Ascending aorta (tissue), 2 donors: ENCODE measurements at regions of chr16 and their contacts with region 1.

Region 1: DNA sequence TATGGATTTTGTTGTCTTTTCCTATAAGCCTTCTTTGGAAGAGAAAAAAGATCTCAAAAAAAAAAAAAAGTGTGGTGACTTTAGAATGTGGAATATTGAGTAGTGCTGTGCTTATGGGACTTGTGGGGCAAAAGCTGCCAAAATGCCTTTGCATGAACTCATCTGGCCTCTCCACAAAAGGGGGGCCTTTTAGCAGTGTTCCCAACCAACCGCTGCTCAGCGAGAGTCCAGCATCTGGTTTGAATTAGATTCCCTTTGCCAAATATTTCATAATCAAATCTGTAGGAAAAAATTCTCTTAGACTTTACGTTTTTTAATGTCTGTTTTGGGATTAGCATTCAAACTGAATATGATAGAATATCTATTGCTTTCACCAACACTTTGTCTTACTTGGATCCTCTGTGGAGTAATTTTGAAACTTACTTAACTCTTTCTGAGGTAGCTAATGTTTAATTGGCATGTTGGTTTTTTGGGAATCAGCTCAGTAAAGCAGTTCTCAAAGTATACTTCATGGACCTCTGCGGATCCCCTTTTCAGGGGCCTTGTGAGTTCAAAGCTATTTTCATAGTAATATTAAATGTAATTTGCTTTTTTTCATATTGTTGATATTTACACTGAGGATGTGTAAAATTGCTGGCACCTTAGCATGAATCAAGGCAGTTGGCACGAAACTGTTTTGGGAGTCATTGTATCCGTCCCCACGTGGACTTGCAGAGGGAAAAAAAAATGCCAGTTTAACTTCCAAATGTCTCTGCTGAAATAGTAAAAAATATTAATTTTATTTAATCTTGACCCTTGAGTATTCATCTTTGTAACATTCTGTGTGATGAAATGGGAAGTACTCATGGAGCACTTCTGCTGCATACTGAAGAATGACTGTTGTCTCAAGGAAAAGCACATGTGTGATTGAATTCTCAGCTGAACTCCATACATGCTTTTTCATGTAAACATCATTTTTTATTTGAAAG is 34.7 kb upstream of the VPS4A start:
- DNase-seq: peak; percentile 16 to 89
- H3K4me3 ChIP-seq: no peak overlapping the region
- H3K27ac ChIP-seq: peak overlapping the region; percentile 12 to 33
- H3K4me1 ChIP-seq: peaks cover 0 to 19% of the 10 kb centered on the region in 2 donors
- H3K27me3 ChIP-seq: no peaks in the 10 kb centered on the region
- CTCF ChIP-seq: no peak

Region 2: DNA sequence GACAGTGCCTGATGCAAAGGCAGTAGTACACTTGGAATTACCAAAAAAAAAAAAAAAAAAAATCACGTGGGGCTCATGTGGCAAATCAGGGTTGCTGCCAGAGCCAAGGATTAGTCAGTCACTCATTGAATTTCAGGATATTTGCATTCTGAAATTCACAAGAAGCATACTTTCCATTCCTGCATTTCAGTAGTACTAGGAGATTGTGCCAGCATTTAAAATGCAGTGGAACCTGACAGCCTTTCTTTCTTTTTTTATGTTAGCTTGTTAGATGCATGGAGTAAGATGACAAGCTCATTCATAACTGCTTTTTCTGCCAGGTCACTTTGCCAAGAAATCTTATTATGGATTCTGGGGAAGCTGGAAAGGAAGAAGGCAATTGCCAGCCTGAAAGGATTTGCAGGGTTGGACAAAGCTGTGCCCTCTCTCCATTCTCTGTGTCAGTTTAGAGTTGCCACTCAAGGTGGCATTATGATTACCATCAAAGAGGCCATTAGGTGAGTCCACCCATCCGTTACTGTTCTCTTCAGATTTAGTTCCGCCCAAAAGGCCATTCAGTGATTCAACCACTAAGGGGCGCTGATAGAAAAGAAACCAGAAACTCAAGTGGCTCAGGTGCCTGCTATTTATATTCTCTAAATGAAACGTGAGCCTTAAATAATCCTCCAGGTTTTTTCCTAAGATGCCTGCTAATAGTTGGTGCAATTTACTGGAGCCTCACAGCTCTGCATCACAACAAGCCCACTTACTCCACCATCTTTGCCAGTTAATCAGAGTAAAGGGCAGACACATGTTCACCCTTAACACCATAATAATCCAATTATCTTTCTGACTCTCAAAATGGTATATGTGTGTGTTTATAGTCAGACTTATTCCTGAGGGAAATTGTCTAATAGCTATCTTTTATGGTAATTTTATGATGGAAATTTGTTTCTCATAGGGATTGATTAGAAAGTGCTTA is 374.1 kb before region 1 on chr16:
- intact Hi-C with region 1: loop called (anchors 5 kb)
- DNase-seq: no peak
- H3K4me3 ChIP-seq: no peak overlapping the region
- H3K27ac ChIP-seq: no peak overlapping the region
- H3K4me1 ChIP-seq: no peaks in the 10 kb centered on the region
- H3K27me3 ChIP-seq: no peaks in the 10 kb centered on the region
- CTCF ChIP-seq: peak; percentile 12 to 52 (median 40)

Region 3: GRCh38 chr16:69717066-69717465 is 440.6 kb after region 1 on chr16:
- intact Hi-C with region 1: no loop called
- DNase-seq: no peak
- H3K4me3 ChIP-seq: no peak overlapping the region
- H3K27ac ChIP-seq: no peak overlapping the region
- H3K4me1 ChIP-seq: no peaks in the 10 kb centered on the region
- H3K27me3 ChIP-seq: no peaks in the 10 kb centered on the region
- CTCF ChIP-seq: no peak